ENCODE measurements at regions of chr16 and their contacts with region 1.

Region 1: GRCh38 chr16:30526823-30527635 is 663 bp upstream of the ZNF768 start:
- DNase-seq: peak; percentile 93
- ATAC-seq: peak; percentile 84
- H3K4me3 Mint-ChIP-seq: peak overlapping the region; percentile 89
- H3K27ac Mint-ChIP-seq: peak overlapping the region; percentile 99
- H3K4me1 Mint-ChIP-seq: peaks cover 21% of the 10 kb centered on the region
- H3K27me3 Mint-ChIP-seq: no peaks in the 10 kb centered on the region
- CTCF ChIP-seq: no peak

Region 2: DNA sequence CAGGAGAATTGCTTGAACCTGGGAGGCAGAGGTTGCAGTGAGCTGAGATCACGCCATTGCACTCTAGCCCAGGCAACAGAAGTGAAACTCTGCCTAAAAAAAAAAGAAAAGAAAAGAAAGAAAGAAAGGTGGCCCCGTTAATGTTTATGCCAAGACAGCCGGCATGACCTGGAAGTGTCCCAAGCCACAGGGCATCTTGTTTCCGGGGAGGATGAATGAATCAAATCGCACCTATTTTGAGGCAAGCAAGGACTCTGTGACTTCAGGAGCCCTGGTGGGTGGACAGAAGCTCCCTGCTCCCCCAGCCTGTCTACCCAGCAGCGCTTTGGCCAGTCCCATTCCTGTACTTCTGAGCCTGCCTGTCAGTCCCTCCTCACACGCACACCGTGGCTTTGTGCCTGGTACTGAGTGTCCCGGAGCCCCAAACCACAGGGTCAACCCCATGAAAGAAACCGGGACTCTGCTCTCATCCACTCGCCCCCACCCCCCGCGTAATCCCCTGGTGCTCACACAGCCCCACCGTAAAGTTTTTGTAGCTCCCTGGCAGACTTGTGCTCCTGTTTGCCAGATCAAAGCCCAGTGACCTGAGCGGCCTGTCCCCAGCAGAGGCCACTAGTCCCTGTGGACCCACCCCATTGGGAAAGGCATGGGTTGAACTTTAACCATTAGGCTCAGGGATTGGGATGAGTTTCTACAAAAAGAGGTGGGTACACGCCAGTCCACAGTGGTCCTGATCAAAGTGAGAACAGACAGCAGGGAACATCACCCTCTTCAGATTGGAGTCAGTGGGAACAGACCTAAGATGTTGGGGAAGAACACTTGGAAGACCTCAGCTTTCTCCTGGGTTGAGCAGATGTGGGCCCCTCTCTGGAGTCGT is 191.2 kb before region 1 on chr16:
- CTCF ChIA-PET with region 1: no interaction called
- POLR2A ChIA-PET with region 1: no interaction called
- intact Hi-C with region 1: loop called (anchors 5 kb)
- DNase-seq: no peak
- ATAC-seq: no peak
- H3K4me3 Mint-ChIP-seq: peak overlapping the region; percentile 82
- H3K27ac Mint-ChIP-seq: peak overlapping the region; percentile 83
- H3K4me1 Mint-ChIP-seq: peaks cover 42% of the 10 kb centered on the region
- H3K27me3 Mint-ChIP-seq: no peaks in the 10 kb centered on the region
- CTCF ChIP-seq: no peak

Region 3: GRCh38 chr16:30445408-30446202 is 81.4 kb before region 1 on chr16 and contains the start of gene SEPHS2:
- CTCF ChIA-PET with region 1: interaction called, 4 read pairs
- POLR2A ChIA-PET with region 1: interaction called, 9 read pairs
- intact Hi-C with region 1: loop called (anchors 1 kb)
- DNase-seq: peak; percentile 87
- ATAC-seq: peak; percentile 96
- H3K4me3 Mint-ChIP-seq: peak within 1 kb of the TSS; percentile 95
- H3K27ac Mint-ChIP-seq: peak within 1 kb of the TSS; percentile 96
- H3K4me1 Mint-ChIP-seq: peaks cover 45% of the 10 kb centered on the region
- H3K27me3 Mint-ChIP-seq: no peaks in the 10 kb centered on the region
- CTCF ChIP-seq: no peak
- total RNA-seq, gene SEPHS2: 79.1 and 80.0 TPM in 2 replicates

Region 4: GRCh38 chr16:30557957-30558788 is 31.1 kb after region 1 on chr16 and contains the start of gene ZNF764:
- CTCF ChIA-PET with region 1: interaction called, 4 read pairs
- POLR2A ChIA-PET with region 1: interaction called, 42 read pairs
- intact Hi-C with region 1: loop called (anchors 2 kb)
- DNase-seq: peak; percentile 91
- ATAC-seq: peak; percentile 93
- H3K4me3 Mint-ChIP-seq: peak within 1 kb of the TSS; percentile 83
- H3K27ac Mint-ChIP-seq: peak within 1 kb of the TSS; percentile 84
- H3K4me1 Mint-ChIP-seq: peaks cover 43% of the 10 kb centered on the region
- H3K27me3 Mint-ChIP-seq: no peaks in the 10 kb centered on the region
- CTCF ChIP-seq: no peak
- total RNA-seq, gene ZNF764: 16.1 and 19.2 TPM in 2 replicates

Region 5: DNA sequence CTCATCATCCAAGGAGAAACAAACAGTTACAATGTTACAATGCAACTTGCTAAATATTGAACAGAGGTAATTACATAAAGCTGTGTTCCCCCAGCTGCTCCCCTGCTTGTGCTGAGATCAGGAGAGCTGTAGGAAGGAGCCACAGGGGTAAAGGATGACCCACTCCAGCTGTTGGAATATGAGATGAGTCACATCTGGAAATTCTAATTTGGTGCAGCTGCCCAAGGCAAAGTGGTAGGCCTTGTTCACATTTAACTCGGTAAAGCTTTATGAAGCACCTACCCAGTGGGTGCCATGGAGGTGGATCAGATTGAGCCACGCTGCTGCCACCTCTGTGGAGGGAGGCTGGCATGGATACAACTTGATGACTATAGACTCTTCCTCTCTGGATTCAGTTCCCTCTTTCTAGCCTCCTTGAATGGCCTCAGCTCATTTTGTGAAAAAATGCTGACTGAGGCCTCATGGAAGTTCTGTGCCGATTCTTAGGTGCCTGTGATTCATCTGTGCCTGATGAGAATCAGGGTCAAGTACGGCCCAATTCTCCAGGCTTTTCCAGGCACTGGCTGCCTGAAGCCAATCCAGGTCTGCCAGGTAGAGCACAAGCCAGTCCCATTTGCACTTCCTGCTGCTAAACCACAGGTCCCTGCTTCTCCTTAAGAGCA is 75.7 kb after region 1 on chr16:
- CTCF ChIA-PET with region 1: interaction called, 6 read pairs
- POLR2A ChIA-PET with region 1: interaction called, 10 read pairs
- intact Hi-C with region 1: no loop called
- DNase-seq: no peak
- ATAC-seq: no peak
- H3K4me3 Mint-ChIP-seq: no peak overlapping the region
- H3K27ac Mint-ChIP-seq: no peak overlapping the region
- H3K4me1 Mint-ChIP-seq: peaks cover 3% of the 10 kb centered on the region
- H3K27me3 Mint-ChIP-seq: no peaks in the 10 kb centered on the region
- CTCF ChIP-seq: no peak

Region 6: DNA sequence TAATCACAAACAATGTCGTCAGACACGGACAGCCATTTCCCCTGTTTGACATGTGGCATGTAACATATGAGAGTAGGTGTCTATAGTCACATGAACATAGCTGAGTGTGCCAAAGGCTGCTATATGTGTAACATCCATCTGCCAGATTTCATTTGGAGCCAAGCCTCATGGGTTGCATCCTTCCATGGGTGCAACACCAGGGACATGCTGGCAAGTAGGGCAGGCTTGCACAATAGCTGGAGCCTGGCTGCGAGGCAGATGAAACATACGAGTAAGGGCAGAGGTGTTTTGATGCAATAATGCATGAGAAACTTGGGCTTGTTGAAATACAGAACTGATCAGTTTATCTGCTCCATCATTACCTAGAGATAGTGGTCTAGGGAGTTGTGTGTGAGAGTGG is 92.2 kb after region 1 on chr16:
- CTCF ChIA-PET with region 1: no interaction called
- POLR2A ChIA-PET with region 1: no interaction called
- intact Hi-C with region 1: no loop called
- DNase-seq: no peak
- ATAC-seq: no peak
- H3K4me3 Mint-ChIP-seq: no peak overlapping the region
- H3K27ac Mint-ChIP-seq: no peak overlapping the region
- H3K4me1 Mint-ChIP-seq: peaks cover under 1% of the 10 kb centered on the region
- H3K27me3 Mint-ChIP-seq: peaks cover 3% of the 10 kb centered on the region
- CTCF ChIP-seq: no peak

Region 7: GRCh38 chr16:30698139-30698815 is 171.2 kb after region 1 on chr16:
- CTCF ChIA-PET with region 1: no interaction called
- POLR2A ChIA-PET with region 1: interaction called, 11 read pairs
- intact Hi-C with region 1: loop called (anchors 1 kb)
- DNase-seq: peak; percentile 96
- ATAC-seq: peak; percentile 75
- H3K4me3 Mint-ChIP-seq: peak overlapping the region; percentile 97
- H3K27ac Mint-ChIP-seq: peak overlapping the region; percentile 100
- H3K4me1 Mint-ChIP-seq: peaks cover 30% of the 10 kb centered on the region
- H3K27me3 Mint-ChIP-seq: no peaks in the 10 kb centered on the region
- CTCF ChIP-seq: no peak

Region 8: GRCh38 chr16:30715737-30716445 is 188.9 kb after region 1 on chr16:
- CTCF ChIA-PET with region 1: no interaction called
- POLR2A ChIA-PET with region 1: no interaction called
- intact Hi-C with region 1: no loop called
- DNase-seq: no peak
- ATAC-seq: peak; percentile 99
- H3K4me3 Mint-ChIP-seq: peak overlapping the region; percentile 50
- H3K27ac Mint-ChIP-seq: peak overlapping the region; percentile 91
- H3K4me1 Mint-ChIP-seq: peaks cover 26% of the 10 kb centered on the region
- H3K27me3 Mint-ChIP-seq: no peaks in the 10 kb centered on the region
- CTCF ChIP-seq: no peak